OCI-LY7 (cell line): ENCODE measurements at regions of chr14 and their contacts with region 1.

Region 1: GRCh38 chr14:35883677-35884293 is 57.6 kb downstream of the BRMS1L start:
- DNase-seq: peak; percentile 49
- H3K4me3 ChIP-seq: no peak overlapping the region
- H3K27ac ChIP-seq: no peak overlapping the region
- H3K4me1 ChIP-seq: no peaks in the 10 kb centered on the region
- CTCF ChIP-seq: peak; percentile 96

Region 2: DNA sequence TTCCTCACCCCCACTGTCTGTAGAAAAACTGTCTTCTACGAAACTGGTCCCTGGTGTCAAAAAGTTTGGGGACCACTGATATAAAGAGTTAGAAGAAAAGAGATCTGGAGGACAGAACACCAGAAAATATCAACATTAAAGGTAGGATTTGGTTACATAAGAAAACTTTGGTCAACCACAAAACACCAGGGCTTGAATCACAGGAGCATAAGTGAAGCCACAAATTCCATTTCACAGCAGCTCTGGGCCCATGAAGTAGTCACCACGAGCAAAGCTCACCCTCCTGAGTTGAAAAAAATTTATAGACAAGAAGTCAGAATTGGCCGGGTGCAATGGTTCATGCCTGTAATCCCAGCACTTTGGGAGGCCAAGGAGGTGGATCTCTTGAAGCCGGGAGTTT is 94.1 kb before region 1 on chr14:
- CTCF ChIA-PET with region 1: no interaction called
- POLR2A ChIA-PET with region 1: no interaction called
- intact Hi-C with region 1: no loop called
- DNase-seq: no peak
- H3K4me3 ChIP-seq: no peak overlapping the region
- H3K27ac ChIP-seq: no peak overlapping the region
- H3K4me1 ChIP-seq: no peaks in the 10 kb centered on the region
- CTCF ChIP-seq: no peak

Region 3: GRCh38 chr14:36373982-36374673 is 490.3 kb after region 1 on chr14:
- CTCF ChIA-PET with region 1: no interaction called
- POLR2A ChIA-PET with region 1: no interaction called
- intact Hi-C with region 1: loop called (anchors 10 kb)
- DNase-seq: peak; percentile 80
- H3K4me3 ChIP-seq: no peak overlapping the region
- H3K27ac ChIP-seq: no peak overlapping the region
- H3K4me1 ChIP-seq: no peaks in the 10 kb centered on the region
- CTCF ChIP-seq: peak; percentile 90